IMR-90 (cell line): ENCODE measurements at regions of chr10 and their contacts with region 1.

Region 1: GRCh38 chr10:60778214-60779029 is at the start of gene CDK1:
- DNase-seq: peak; percentile 98
- ATAC-seq: peak; percentile 98
- H3K4me3 ChIP-seq: peak within 1 kb of the TSS; percentile 76
- H3K27ac ChIP-seq: peak within 1 kb of the TSS; percentile 49; the same call in 1 of the 2 replicates
- H3K4me1 ChIP-seq: peaks cover 4% of the 10 kb centered on the region
- H3K27me3 ChIP-seq: no peaks in the 10 kb centered on the region
- CTCF ChIP-seq: no peak
- POLR2A ChIP-seq: peak; percentile 79
- RAD21 ChIP-seq: no peak
- total RNA-seq, gene CDK1: 28.1 and 37.5 TPM in 2 replicates

Region 2: GRCh38 chr10:60237977-60238758 is 540.3 kb before region 1 on chr10:
- CTCF ChIA-PET with region 1: no interaction called
- POLR2A ChIA-PET with region 1: no interaction called
- dilution Hi-C with region 1: no loop called
- in situ Hi-C with region 1: no loop called
- intact Hi-C with region 1: loop called (anchors 10 kb)
- DNase-seq: peak; percentile 70
- ATAC-seq: peak; percentile 99
- H3K4me3 ChIP-seq: no peak overlapping the region
- H3K27ac ChIP-seq: no peak overlapping the region
- H3K4me1 ChIP-seq: no peaks in the 10 kb centered on the region; the same call in 1 of the 2 replicates
- H3K27me3 ChIP-seq: no peaks in the 10 kb centered on the region
- CTCF ChIP-seq: peak; percentile 56
- POLR2A ChIP-seq: no peak
- RAD21 ChIP-seq: peak; percentile 70